OCI-LY7 (cell line): ENCODE measurements at regions of chr3 and their contacts with region 1.

Region 1: GRCh38 chr3:173416070-173416469 is 18.5 kb downstream of the NLGN1 start:
- DNase-seq: no peak
- H3K4me3 ChIP-seq: no peak overlapping the region
- H3K27ac ChIP-seq: no peak overlapping the region
- H3K4me1 ChIP-seq: no peaks in the 10 kb centered on the region
- CTCF ChIP-seq: no peak

Region 2: DNA sequence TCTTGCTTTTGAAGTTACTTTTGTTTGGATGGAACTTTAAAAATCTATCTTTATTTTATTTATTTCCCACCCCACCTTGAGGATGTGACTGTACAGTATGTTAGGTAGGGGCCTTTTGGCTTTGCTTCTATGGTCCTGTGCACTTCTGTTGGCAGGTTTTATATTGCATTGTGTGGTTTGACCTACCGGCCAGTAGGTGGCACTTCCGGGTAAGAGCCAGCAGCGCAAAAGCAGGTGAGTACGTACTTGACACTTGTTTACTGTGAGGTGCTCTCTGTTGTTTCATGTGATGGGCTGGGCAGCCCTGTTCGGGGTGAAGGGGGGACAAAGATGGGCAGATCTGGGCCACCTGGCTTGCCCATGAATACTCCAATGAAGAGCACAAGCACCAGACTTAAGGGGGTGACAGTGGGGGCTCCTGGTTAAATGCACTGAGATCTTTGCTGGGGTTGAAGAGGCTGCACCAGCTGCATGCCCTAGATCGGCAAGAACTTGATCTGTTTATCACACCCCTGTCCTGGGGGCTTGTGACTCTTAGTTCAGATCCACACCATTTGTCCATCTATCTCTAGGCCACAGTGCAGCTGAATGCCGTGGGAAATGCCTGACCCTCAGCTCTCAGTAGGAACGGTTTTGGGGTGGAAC is 113.1 kb after region 1 on chr3:
- CTCF ChIA-PET with region 1: no interaction called
- POLR2A ChIA-PET with region 1: interaction called, 15 read pairs
- intact Hi-C with region 1: no loop called
- DNase-seq: peak; percentile 26
- H3K4me3 ChIP-seq: no peak overlapping the region
- H3K27ac ChIP-seq: no peak overlapping the region
- H3K4me1 ChIP-seq: no peaks in the 10 kb centered on the region
- CTCF ChIP-seq: peak; percentile 72